ENCODE measurements at regions of chr20 and their contacts with region 1.

Region 1: GRCh38 chr20:50395258-50395729 is 114.9 kb upstream of the PTPN1 start:
- DNase-seq: no peak
- ATAC-seq: no peak
- H3K4me3 ChIP-seq: no peak overlapping the region
- H3K27ac ChIP-seq: peak overlapping the region; percentile 23
- H3K4me1 ChIP-seq: peaks cover 95% of the 10 kb centered on the region
- H3K27me3 ChIP-seq: no peaks in the 10 kb centered on the region
- CTCF ChIP-seq: no peak
- EP300 ChIP-seq: no peak
- POLR2A ChIP-seq: no peak
- RAD21 ChIP-seq: no peak

Region 2: GRCh38 chr20:50308513-50309279 is 86.6 kb before region 1 on chr20:
- CTCF ChIA-PET with region 1: no interaction called
- POLR2A ChIA-PET with region 1: interaction called, 78 read pairs
- in situ Hi-C with region 1: no loop called
- intact Hi-C with region 1: loop called (anchors 1 kb)
- DNase-seq: peak; percentile 96
- ATAC-seq: peak; percentile 15
- H3K4me3 ChIP-seq: peak overlapping the region; percentile 53 to 78 (median 61)
- H3K27ac ChIP-seq: peak overlapping the region; percentile 75
- H3K4me1 ChIP-seq: peaks cover 66% of the 10 kb centered on the region
- H3K27me3 ChIP-seq: no peaks in the 10 kb centered on the region
- CTCF ChIP-seq: peak; percentile 67
- EP300 ChIP-seq: peak in 1 of 2 experiments; percentile 62; a peak in 3 of 4 replicates
- POLR2A ChIP-seq: peak in 1 of 2 experiments; percentile 11; a peak in 2 of 4 replicates
- RAD21 ChIP-seq: peak; percentile 46

Region 3: GRCh38 chr20:50372776-50373167 is 22.5 kb before region 1 on chr20:
- CTCF ChIA-PET with region 1: no interaction called
- POLR2A ChIA-PET with region 1: interaction called, 58 read pairs
- in situ Hi-C with region 1: no loop called
- intact Hi-C with region 1: loop called (anchors 1 kb)
- DNase-seq: peak; percentile 80
- ATAC-seq: peak; percentile 5; the same call in 2 of the 3 replicates
- H3K4me3 ChIP-seq: no peak overlapping the region
- H3K27ac ChIP-seq: peak overlapping the region; percentile 45
- H3K4me1 ChIP-seq: peaks cover 82% of the 10 kb centered on the region
- H3K27me3 ChIP-seq: no peaks in the 10 kb centered on the region
- CTCF ChIP-seq: 0 out of 2 replicates have a peak, but pooled peaks have one; percentile 4
- EP300 ChIP-seq: peak; percentile 64 to 71; a peak in 3 of 4 replicates
- POLR2A ChIP-seq: 0 out of 4 replicates have a peak, but pooled peaks of 1 of the 2 experiments have one; percentile 33
- RAD21 ChIP-seq: no peak

Region 4: DNA sequence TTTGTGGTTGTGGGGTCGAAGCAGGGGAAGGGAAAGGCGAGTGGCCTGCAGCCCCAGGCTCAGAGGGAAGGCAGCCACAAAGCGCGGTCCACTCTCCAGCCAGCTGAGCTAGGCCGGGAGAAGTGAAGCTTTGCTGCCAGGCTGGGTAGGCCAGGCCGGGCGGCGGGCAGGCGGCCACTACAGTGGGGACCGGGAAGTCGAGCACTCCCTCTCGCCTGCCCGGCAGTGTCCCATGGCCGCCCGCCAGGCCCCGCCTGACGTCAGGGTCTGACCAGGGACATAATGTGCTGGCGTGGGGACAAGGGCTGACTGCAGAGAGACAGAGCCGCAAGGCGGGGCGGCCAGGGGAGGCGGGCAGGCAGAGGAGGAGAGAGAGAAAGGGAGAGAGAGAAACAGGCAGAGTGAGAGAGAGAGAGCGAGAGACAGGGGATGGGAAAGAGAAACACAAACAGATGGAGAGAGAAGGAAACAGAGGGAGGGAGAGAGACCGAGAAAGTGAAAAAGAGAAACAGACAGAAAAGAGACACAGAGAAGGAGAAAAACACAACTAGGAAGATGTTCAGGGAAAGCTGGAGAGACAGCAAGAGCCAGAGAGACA is 20.3 kb after region 1 on chr20:
- CTCF ChIA-PET with region 1: no interaction called
- POLR2A ChIA-PET with region 1: interaction called, 79 read pairs
- in situ Hi-C with region 1: no loop called
- intact Hi-C with region 1: no loop called
- DNase-seq: peak; percentile 86
- ATAC-seq: peak; percentile 86
- H3K4me3 ChIP-seq: peak overlapping the region; percentile 16 to 58 (median 40)
- H3K27ac ChIP-seq: peak overlapping the region; percentile 63
- H3K4me1 ChIP-seq: peaks cover 88% of the 10 kb centered on the region
- H3K27me3 ChIP-seq: no peaks in the 10 kb centered on the region
- CTCF ChIP-seq: peak; percentile 28
- EP300 ChIP-seq: no peak
- POLR2A ChIP-seq: peak; percentile 40 to 67
- RAD21 ChIP-seq: peak; percentile 35

Region 5: GRCh38 chr20:50450881-50451752 is 55.8 kb after region 1 on chr20:
- CTCF ChIA-PET with region 1: no interaction called
- POLR2A ChIA-PET with region 1: interaction called, 46 read pairs
- in situ Hi-C with region 1: no loop called
- intact Hi-C with region 1: no loop called
- DNase-seq: peak; percentile 68
- ATAC-seq: peak; percentile 76
- H3K4me3 ChIP-seq: peak overlapping the region; percentile 57 to 78 (median 61)
- H3K27ac ChIP-seq: peak overlapping the region; percentile 39
- H3K4me1 ChIP-seq: peaks cover 100% of the 10 kb centered on the region
- H3K27me3 ChIP-seq: no peaks in the 10 kb centered on the region; a peak in 1 of 5 replicates
- CTCF ChIP-seq: no peak
- EP300 ChIP-seq: peak in 1 of 2 experiments; percentile 1; a peak in 1 of 4 replicates
- POLR2A ChIP-seq: peak; percentile 22 to 31; a peak in 1 of 4 replicates
- RAD21 ChIP-seq: 0 out of 2 replicates have a peak, but pooled peaks have one; percentile 23

Measured in HepG2 (cell line).